ENCODE measurements at regions of chr10 and their contacts with region 1.

Region 1: DNA sequence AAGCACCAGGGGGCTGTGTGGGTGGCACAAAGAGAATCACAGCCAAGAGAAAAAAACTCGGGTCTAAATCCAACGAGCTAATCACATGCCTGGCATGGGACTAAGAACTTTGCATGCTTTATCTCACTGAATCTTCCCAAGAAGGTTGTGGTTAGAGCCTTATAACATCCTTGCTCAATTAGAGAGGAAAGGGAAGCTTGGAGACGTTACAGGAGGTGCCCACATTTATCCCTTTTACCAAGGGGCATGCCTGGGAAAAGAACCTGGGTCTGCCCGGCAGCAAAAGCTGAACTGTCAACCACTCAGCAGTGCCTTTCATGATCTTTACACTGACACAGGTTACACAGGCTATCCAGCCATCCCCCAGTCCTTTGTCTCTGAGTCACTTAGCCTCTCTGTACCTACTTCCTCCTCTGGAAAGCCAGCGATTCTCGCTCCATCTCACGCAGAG is 190.1 kb downstream of the PRPF18 start:
- DNase-seq: no peak
- ATAC-seq: no peak

Region 2: DNA sequence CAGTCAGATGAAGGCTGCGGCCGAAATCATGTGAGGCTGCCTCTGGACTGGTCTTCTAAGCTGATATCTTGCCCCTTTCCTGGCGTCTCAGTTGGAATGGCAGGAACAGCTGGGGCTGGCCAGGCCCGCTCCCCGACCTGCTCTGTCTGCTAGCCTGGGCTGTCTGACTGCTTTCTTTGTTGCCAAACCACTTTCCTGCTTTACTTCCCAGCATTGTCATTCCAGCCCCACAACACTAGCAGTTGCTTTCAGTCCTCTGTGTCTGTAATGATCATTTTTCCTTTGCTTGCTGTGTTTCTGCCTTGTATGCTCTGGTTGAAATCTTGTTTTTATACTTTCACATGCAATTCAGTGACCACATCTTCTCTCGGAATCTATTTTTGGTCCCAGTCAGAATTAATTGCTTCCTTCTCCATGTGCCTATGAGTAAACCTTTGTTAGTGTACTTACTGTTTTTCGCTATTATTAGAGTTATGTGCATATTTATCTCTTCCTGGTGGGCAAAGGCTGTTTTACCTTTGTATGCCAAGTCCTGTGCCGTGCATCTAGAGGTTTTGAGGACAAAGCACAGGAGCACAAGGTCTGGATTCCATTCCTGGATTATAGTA is 168.5 kb before region 1 on chr10:
- intact Hi-C with region 1: loop called (anchors 5 kb)
- DNase-seq: no peak
- ATAC-seq: no peak

Region 3: DNA sequence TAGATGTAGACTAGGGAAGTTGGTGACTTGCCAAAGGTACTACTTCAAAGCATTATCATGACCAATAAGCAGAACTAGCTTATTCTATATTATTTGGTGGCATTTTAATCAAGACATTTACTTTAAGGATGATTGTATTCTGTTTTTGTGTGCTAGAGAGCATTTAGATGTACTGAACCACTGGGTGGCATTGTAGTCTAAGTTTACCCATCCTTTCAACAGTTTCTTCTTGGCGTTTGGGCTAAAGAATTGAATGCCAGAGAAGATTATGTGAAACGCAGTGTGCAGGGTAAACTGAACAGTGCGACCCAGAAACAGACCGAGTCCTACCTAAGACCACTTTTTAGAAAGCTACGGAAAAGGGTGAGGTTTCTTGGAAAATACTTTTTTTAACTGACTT is 163.4 kb before region 1 on chr10:
- intact Hi-C with region 1: loop called (anchors 5 kb)
- DNase-seq: no peak
- ATAC-seq: peak; percentile 41 to 68

Region 4: DNA sequence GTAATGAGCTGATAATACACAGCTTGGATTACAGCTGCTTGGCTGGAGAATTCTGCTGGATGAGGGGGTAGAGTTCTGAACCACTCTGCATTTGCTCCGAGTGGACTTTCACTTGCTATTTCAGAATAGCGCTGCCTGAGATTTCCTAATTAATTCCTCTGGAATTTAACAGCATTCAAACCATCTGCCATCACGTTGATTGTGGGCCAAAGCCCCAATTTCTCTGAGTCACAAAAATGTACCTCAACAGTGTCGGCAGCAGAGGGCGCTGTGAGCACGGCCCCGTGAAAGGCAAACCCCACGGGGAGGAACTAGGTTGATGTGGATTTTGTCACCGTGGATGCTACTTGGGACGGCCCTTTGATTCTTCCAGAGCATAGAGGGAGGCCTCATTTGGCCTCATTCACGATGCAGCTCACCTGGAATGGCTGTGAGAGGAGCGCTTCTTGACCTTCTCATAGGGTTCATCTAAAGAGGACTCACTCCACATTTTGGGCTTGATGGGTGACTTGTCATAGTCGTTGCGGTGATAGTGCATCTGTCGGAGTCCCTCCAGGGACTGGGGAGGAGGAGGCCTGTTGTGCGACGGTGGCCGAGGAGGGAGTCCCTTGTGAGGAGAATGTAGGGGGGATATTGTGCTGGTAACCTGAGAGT is 116.9 kb before region 1 on chr10:
- intact Hi-C with region 1: loop called (anchors 1 to 5 kb)
- DNase-seq: peak; percentile 75
- ATAC-seq: peak; percentile 72

Region 5: DNA sequence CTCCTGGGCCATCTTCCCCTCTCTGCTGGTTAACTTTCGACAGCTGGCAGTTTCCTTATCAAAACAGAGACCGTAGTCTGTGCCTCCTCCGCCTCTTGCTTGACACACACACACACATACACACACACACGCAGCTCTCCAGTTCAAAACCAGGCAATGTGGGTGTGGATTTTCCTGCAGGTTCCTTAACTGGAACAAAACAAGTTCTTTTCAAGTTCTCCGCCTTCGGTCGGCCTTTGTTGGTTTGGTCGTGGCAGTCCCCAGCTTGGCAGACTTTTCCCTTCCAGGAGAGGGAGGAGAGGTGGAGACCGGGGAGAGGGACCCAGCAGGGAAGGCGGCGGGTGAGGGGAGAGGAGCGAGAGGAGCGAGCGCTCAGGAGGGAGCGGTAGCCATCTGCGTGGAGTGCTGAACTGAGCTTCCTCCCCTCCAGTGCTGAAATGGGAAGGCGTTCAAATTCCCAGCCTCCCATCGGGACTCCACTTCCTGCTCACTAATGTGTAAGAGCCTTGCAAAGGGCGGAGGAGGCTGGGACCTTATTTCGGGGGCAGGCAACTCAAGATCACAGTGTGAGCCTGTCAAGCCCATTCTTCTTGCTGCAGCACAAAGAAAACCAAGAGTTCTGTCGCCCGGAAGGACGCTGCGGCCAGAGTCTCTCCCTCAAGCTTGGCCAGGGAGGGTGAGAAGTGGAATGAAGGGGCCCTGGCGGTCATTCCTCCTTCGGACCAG is 69.6 kb before region 1 on chr10:
- intact Hi-C with region 1: loop called in 1 of 2 experiments (anchors 5 kb)
- DNase-seq: peak; percentile 84
- ATAC-seq: peak; percentile 88 to 92

Region 6: DNA sequence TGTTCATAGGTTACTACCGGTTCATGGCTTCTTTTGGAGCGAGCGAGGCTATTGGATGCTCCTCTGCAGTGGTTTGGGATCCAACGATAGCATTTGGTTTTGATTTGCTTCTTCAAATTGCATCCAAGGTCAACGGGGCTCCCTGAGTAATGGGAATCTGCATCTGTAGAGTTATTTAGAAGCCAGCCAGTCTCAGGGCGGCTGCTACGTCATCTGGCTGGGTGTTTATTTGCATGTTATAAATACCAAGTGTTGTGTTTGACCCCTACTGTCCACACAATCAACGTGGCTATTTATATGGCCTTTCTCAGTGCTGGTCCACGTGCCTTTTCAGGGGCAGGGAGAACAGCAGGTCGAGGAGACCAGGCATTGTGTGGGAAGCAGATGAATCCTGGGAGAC is 52.4 kb before region 1 on chr10:
- intact Hi-C with region 1: loop called in 1 of 2 experiments (anchors 10 kb)
- DNase-seq: no peak
- ATAC-seq: peak; percentile 76 to 81